ENCODE measurements at regions of chrX and their contacts with region 1.

Region 1: GRCh38 chrX:68828740-68829552 is at the start of gene EFNB1:
- DNase-seq: peak; percentile 93
- ATAC-seq: peak; percentile 91 to 94
- total RNA-seq, gene EFNB1: 23.6 to 25.4 TPM

Region 2: DNA sequence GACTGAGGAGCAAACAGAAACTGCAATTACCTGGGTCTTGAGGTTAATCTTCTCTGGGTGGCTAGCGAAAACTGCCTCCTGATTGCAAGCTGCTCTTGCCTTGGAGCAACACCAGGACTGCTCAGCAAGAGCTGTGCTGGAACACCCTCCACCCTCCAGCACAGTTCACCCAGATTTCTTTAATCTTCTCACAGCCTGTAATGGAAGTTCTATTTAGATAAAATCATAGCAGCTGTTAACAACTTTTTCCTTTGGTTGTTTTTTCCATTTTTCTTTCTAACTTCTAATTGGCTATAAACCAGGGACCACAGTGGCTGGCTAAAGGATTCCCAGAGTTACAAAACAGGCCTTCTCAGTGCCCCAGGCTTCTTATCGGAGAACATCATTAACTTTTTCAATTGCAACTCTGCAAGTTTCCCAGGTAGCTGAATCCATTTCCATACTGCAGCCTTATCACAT is 432.0 kb before region 1 on chrX:
- intact Hi-C with region 1: no loop called
- DNase-seq: no peak
- ATAC-seq: peak in 1 of 2 donors; percentile 67

Region 3: GRCh38 chrX:68894513-68895340 is 65.8 kb after region 1 on chrX:
- intact Hi-C with region 1: loop called in 1 of 2 experiments (anchors 5 kb)
- DNase-seq: peak; percentile 73
- ATAC-seq: peak; percentile 86 to 87

Region 4: GRCh38 chrX:69060631-69061408 is 231.9 kb after region 1 on chrX:
- intact Hi-C with region 1: loop called (anchors 2 to 5 kb)
- DNase-seq: peak; percentile 34
- ATAC-seq: peak; percentile 82 to 85

Region 5: DNA sequence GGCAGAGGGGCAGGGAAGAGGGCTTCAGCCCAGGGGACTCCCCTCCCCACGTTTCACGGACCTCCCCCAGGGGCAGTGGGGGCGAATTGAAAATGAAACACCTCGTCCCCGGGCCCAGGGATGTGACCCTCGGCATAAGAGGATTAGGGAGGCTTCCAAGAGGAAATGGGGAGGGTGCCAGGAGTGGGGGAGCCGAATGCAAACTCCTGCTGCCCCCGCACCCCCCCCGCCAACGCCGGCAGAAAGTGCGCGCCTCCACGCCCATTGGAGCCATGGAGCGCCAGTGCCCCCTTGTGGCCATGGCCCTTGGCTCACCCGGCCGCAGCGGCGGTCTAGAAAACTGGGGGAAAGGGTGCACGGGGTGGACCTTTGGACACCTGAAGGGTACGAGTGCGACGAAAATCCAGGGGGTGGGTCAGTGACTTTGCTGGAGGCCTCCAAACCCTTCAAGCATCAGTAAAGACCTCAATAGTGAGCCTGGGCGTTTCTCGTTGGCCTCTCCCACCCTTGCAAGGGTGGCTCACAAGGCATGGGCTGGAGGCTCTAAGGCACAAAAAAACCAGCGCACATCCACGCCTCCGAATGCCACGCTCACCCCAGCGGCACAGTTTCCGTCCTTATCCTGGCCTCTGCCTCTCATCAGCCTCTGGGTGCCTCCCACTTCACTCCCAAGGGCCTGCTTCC is 457.1 kb after region 1 on chrX:
- intact Hi-C with region 1: loop called in 1 of 2 experiments (anchors 10 kb)
- DNase-seq: peak; percentile 69
- ATAC-seq: peak; percentile 77 to 86

Region 6: DNA sequence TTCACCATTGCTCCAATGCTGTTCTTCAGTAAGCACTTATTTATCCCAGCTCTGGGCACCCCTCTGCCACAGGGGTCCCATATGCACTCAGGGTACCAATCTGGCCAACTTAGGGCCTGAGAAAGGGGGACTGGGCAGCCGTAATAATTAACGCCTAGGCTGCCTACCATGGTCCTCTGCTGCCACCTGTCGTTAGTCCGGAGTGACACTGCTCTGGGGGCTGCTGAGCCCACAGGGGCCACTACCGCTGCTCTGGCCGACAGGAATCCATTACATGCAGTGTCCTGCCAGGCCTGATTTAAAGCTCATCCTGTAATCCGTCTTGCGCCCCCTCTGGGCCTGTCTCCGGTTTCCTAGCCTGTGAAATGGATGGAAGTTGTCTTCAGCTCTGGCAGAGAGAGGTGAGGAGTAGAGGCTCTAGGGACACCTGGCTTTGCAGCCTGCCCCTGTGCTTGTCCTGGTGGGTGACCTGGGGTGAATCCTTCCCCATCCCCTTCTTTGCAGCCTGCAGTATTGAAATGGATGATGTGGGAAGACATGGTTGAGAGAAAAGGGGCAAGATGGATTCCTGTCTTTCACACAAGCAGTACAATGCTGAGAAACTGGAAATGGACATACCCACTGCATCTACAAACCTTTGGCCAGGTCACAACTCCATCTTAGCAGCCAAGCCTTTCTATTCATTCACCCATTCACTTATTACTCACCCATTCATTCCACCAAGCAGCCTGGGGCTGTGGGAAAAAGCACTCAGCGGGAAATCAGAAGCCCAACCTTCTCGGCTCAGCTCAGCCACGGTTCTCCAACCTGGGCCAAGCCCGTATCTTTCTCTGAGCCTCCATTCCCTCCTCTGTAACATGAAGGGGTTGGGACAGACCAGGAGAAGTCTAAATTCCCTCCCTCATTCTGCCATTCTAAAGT is 558.9 kb after region 1 on chrX:
- intact Hi-C with region 1: loop called (anchors 5 to 10 kb)
- DNase-seq: peak; percentile 46
- ATAC-seq: peak; percentile 62 to 82

Measured in left cardiac atrium (tissue), 4 donors.